Naive thymus-derived CD8-positive, alpha-beta T cell (primary cell): ENCODE measurements at regions of chr17 and their contacts with region 1.

Region 1: GRCh38 chr17:5226940-5227878 is 7.5 kb downstream of the SCIMP start:
- DNase-seq: peak in 6 of 10 donors; percentile 23 to 72 (median 56)
- ATAC-seq: peak; percentile 85 to 90
- H3K4me3 Mint-ChIP-seq: peak overlapping the region; percentile 60 to 89 (median 75)
- H3K27ac Mint-ChIP-seq: peak overlapping the region; percentile 88 to 99 (median 97)
- H3K4me1 Mint-ChIP-seq: peaks cover 22 to 80% (median 67%) of the 10 kb centered on the region in 4 donors
- H3K27me3 Mint-ChIP-seq: no peaks in the 10 kb centered on the region

Region 2: DNA sequence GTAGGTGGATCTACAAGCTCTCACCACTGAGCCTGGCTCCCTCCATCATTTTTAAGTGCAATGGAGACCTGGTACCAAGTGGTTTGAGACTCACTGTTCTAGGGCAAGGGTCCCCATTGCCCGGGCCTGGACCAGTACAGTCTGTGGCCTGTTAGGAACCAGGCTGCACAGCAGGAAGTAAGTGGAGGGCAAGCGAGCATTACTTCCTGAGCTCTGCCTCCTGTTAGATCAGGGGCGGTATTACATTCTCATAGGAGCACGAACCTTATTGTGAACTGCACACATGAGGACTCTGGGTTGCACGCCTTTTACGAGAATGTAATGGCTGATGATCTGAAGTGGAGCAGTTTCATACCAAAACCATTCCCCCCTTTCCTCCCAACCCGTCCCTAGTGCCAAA is 28.7 kb before region 1 on chr17:
- POLR2A ChIA-PET with region 1: interaction called, 15 read pairs
- DNase-seq: peak in 3 of 10 donors; percentile 3 to 30 (median 21)
- ATAC-seq: peak in 1 of 2 donors; percentile 53
- H3K4me3 Mint-ChIP-seq: peak overlapping the region in 4 of 10 donors; percentile 26 to 45 (median 40)
- H3K27ac Mint-ChIP-seq: peak overlapping the region; percentile 4 to 90 (median 77)
- H3K4me1 Mint-ChIP-seq: peaks cover 4 to 26% (median 15%) of the 10 kb centered on the region in 4 donors
- H3K27me3 Mint-ChIP-seq: no peaks in the 10 kb centered on the region

Region 3: GRCh38 chr17:5210614-5211252 is 16.5 kb before region 1 on chr17:
- POLR2A ChIA-PET with region 1: interaction called, 34 read pairs
- DNase-seq: peak in 1 of 10 donors; percentile 16
- ATAC-seq: peak in 1 of 2 donors; percentile 56
- H3K4me3 Mint-ChIP-seq: peak overlapping the region in 9 of 10 donors; percentile 4 to 67 (median 45)
- H3K27ac Mint-ChIP-seq: peak overlapping the region; percentile 60 to 92 (median 86)
- H3K4me1 Mint-ChIP-seq: peaks cover 14 to 50% (median 32%) of the 10 kb centered on the region in 4 donors
- H3K27me3 Mint-ChIP-seq: no peaks in the 10 kb centered on the region

Region 4: GRCh38 chr17:5237541-5238016 is 10.4 kb after region 1 on chr17:
- POLR2A ChIA-PET with region 1: interaction called, 32 read pairs
- DNase-seq: peak in 1 of 10 donors; percentile 42
- ATAC-seq: peak in 1 of 2 donors; percentile 8
- H3K4me3 Mint-ChIP-seq: peak overlapping the region in 2 of 10 donors; percentile 17 to 23
- H3K27ac Mint-ChIP-seq: peak overlapping the region; percentile 4 to 82 (median 66)
- H3K4me1 Mint-ChIP-seq: peaks cover 16 to 73% (median 44%) of the 10 kb centered on the region in 4 donors
- H3K27me3 Mint-ChIP-seq: no peaks in the 10 kb centered on the region